ENCODE measurements at regions of chr9 and their contacts with region 1.

Region 1: GRCh38 chr9:136769710-136770191 is 5.4 kb upstream of the LCN15 start:
- DNase-seq: peak in 7 of 9 donors; percentile 26 to 63 (median 37)
- ATAC-seq: peak; percentile 90
- H3K4me3 ChIP-seq: no peak overlapping the region
- H3K4me3 Mint-ChIP-seq: peak overlapping the region in 2 of 10 donors; percentile 38 to 47
- H3K27ac ChIP-seq: no peak overlapping the region
- H3K27ac Mint-ChIP-seq: no peak overlapping the region
- H3K4me1 ChIP-seq: no peaks in the 10 kb centered on the region
- H3K4me1 Mint-ChIP-seq: peaks cover 0 to 10% (median 5%) of the 10 kb centered on the region in 7 donors
- H3K27me3 ChIP-seq: no peaks in the 10 kb centered on the region
- H3K27me3 Mint-ChIP-seq: peaks cover 0 to 22% (median 17%) of the 10 kb centered on the region in 5 donors

Region 2: GRCh38 chr9:136784249-136784996 is 14.7 kb after region 1 on chr9:
- CTCF ChIA-PET with region 1: interaction called, 3 read pairs
- POLR2A ChIA-PET with region 1: no interaction called
- intact Hi-C with region 1: loop called in 1 of 2 experiments (anchors 2 kb)
- DNase-seq: no peak
- ATAC-seq: no peak
- H3K4me3 ChIP-seq: no peak overlapping the region
- H3K4me3 Mint-ChIP-seq: no peak overlapping the region
- H3K27ac ChIP-seq: no peak overlapping the region
- H3K27ac Mint-ChIP-seq: no peak overlapping the region
- H3K4me1 ChIP-seq: no peaks in the 10 kb centered on the region
- H3K4me1 Mint-ChIP-seq: peaks cover 5 to 18% (median 8%) of the 10 kb centered on the region in 7 donors
- H3K27me3 ChIP-seq: no peaks in the 10 kb centered on the region
- H3K27me3 Mint-ChIP-seq: peaks cover 0 to 50% (median 0%) of the 10 kb centered on the region in 5 donors

Region 3: DNA sequence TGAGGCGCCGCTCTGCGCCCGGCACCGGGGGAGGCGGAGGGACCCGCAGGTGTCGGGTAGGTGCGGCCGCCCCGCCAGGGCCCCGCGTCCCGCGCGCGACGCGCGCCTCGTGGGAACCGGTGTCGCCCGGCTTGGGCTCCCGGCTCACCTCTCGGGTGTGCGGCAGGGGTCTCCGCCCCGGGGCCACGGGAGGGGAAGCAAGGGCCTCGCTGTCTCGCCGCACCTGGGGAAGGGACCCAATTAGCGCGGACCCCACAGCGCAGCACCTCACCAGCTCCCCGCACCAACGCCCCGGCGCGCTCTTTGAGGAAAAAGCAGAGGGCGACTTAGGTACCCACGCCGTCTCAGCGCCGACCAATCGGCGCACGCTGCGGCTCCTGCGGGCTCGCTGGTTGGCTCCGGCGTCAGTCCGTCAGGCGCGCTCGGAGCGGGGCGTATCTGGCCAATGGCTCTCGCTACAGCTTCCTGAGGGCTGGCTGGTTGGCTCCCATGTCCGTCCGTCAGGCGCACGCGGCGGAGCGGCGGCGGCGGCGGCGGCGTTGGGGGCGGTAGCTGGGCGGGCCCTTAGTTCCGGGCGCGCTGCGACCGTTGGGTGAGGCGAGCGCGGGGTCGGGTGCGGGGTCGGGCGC is 116.3 kb after region 1 on chr9 and contains the start of gene TRAF2:
- CTCF ChIA-PET with region 1: no interaction called
- POLR2A ChIA-PET with region 1: no interaction called
- intact Hi-C with region 1: no loop called
- DNase-seq: peak; percentile 93 to 98 (median 96)
- ATAC-seq: peak; percentile 95
- H3K4me3 ChIP-seq: peak within 1 kb of the TSS; percentile 76
- H3K4me3 Mint-ChIP-seq: peak within 1 kb of the TSS; percentile 83 to 99 (median 86)
- H3K27ac ChIP-seq: peak within 1 kb of the TSS; percentile 97
- H3K27ac Mint-ChIP-seq: peak within 1 kb of the TSS; percentile 78 to 95 (median 89)
- H3K4me1 ChIP-seq: peaks cover 26 to 29% of the 10 kb centered on the region in 2 donors
- H3K4me1 Mint-ChIP-seq: peaks cover 17 to 53% (median 37%) of the 10 kb centered on the region in 7 donors
- H3K27me3 ChIP-seq: no peaks in the 10 kb centered on the region
- H3K27me3 Mint-ChIP-seq: no peaks in the 10 kb centered on the region
- total RNA-seq, gene TRAF2: 14.6 to 72.8 (median 29.6) TPM

Region 4: GRCh38 chr9:137034863-137035761 is 265.4 kb after region 1 on chr9:
- CTCF ChIA-PET with region 1: no interaction called
- POLR2A ChIA-PET with region 1: no interaction called
- intact Hi-C with region 1: no loop called
- DNase-seq: peak; percentile 74 to 88 (median 82)
- ATAC-seq: peak; percentile 84
- H3K4me3 ChIP-seq: peak overlapping the region; percentile 34
- H3K4me3 Mint-ChIP-seq: peak overlapping the region; percentile 55 to 81 (median 66)
- H3K27ac ChIP-seq: no peak overlapping the region
- H3K27ac Mint-ChIP-seq: peak overlapping the region in 4 of 9 donors; percentile 19 to 85 (median 43)
- H3K4me1 ChIP-seq: peaks cover 36 to 41% of the 10 kb centered on the region in 2 donors
- H3K4me1 Mint-ChIP-seq: peaks cover 11 to 36% (median 24%) of the 10 kb centered on the region in 7 donors
- H3K27me3 ChIP-seq: no peaks in the 10 kb centered on the region
- H3K27me3 Mint-ChIP-seq: peaks cover 0 to 3% (median 0%) of the 10 kb centered on the region in 5 donors

Measured in naive thymus-derived CD4-positive, alpha-beta T cell (primary cell).